Ovary (tissue), 10 donors: ENCODE measurements at regions of chr7 and their contacts with region 1.

Region 1: GRCh38 chr7:30697719-30698460 is 15.6 kb upstream of the CRHR2 start:
- DNase-seq: no peak
- H3K4me3 ChIP-seq: no peak overlapping the region
- H3K27ac ChIP-seq: no peak overlapping the region
- H3K4me1 ChIP-seq: peaks cover 3% of the 10 kb centered on the region
- H3K27me3 ChIP-seq: no peaks in the 10 kb centered on the region
- CTCF ChIP-seq: no peak
- EP300 ChIP-seq: no peak
- POLR2A ChIP-seq: no peak

Region 2: GRCh38 chr7:31443457-31443856 is 745.6 kb after region 1 on chr7:
- intact Hi-C with region 1: loop called in 1 of 4 experiments (anchors 10 kb)
- DNase-seq: no peak
- H3K4me3 ChIP-seq: no peak overlapping the region
- H3K27ac ChIP-seq: no peak overlapping the region
- H3K4me1 ChIP-seq: no peaks in the 10 kb centered on the region
- H3K27me3 ChIP-seq: no peaks in the 10 kb centered on the region
- CTCF ChIP-seq: no peak
- EP300 ChIP-seq: no peak
- POLR2A ChIP-seq: no peak